Activated CD8-positive, alpha-beta T cell treated with anti-CD3 and anti-CD28 coated beads, Interleukin-2, amount 10 ng/mL, durations not matched to agents 7 days and 5 days (primary cell): ENCODE measurements at regions of chr10 and their contacts with region 1.

Region 1: DNA sequence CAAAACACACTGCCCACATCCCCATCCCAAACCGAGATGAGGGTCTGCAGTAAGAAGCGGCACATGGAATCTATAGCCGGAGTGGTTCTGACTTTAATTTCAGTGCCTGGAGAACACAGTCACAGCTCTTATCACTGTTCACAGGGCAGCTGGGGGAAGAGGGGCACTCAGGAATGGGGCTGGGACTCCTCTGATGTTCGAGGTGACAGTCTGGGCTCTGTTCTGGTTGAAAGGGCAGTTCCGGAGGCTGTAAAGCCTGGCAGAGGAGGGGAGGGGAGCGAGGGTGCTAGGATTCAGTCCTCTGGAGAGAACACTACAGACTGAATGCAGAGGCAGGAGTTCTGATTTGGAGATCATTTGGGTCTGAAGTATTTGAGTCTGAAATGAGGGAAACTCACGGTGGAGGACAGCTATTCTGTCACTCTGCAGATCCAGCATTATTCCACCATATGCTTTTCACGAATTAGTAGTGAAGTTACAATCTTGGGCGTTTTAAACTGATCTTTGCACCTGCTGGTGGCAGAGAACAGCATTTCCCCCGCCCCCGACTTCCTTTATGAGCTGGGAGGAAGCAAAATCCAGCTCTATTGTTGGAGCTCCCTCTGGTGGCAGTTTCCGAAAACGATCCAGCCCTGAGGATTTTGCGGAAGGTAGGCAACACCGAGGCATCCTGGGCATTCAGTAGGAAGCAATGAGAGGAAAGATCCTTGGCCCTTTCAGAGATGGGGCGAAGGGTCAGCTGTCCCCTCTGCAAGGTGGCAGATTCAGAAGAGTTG is 22.7 kb upstream of the KCNK18 start:
- DNase-seq: peak; percentile 87
- ATAC-seq: peak; percentile 87
- H3K4me3 Mint-ChIP-seq: peak overlapping the region; percentile 78
- H3K27ac Mint-ChIP-seq: peak overlapping the region; percentile 58
- H3K4me1 Mint-ChIP-seq: peaks cover 18% of the 10 kb centered on the region
- H3K27me3 Mint-ChIP-seq: peaks cover 36% of the 10 kb centered on the region

Region 2: DNA sequence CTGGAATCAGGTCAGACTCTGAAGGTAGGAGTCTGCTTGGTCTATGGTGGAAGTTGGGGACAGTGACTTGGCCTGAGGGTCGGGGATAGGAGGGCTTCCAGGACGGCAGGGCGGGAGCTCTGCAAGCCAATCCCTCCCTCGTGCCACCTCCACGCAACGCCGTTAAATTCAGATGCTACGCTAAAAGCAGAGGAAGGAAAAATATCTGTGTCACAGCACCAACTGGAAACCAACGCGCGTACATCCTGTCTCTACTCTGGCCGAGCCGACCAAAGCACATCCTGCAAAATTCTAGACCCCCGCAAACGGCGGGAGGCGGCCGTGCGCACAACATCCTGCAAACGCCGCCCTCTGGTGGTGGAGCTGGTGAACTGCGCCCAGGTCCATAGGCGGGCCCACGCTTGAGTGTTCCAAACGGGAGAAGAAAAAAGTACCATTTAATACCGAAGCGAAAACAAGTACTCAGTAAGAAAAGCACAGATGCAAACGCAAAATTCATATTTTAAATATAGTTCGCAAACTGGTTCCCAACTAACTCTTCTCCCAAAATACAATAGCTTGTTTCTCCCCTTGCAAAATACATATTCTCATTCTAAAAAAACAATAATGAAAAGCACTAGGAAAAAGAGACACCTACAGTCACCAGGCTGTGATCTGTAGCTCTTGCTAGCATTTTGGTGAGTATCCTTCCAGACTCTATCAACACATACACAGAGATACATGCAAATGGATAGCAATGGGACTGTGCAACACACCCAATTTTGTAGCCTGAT is 386.5 kb before region 1 on chr10:
- CTCF ChIA-PET with region 1: interaction called, 51 read pairs
- POLR2A ChIA-PET with region 1: no interaction called
- DNase-seq: peak; percentile 88
- ATAC-seq: peak; percentile 91
- H3K4me3 Mint-ChIP-seq: peak overlapping the region; percentile 49
- H3K27ac Mint-ChIP-seq: peak overlapping the region; percentile 74
- H3K4me1 Mint-ChIP-seq: peaks cover 12% of the 10 kb centered on the region
- H3K27me3 Mint-ChIP-seq: peaks cover 11% of the 10 kb centered on the region

Region 3: DNA sequence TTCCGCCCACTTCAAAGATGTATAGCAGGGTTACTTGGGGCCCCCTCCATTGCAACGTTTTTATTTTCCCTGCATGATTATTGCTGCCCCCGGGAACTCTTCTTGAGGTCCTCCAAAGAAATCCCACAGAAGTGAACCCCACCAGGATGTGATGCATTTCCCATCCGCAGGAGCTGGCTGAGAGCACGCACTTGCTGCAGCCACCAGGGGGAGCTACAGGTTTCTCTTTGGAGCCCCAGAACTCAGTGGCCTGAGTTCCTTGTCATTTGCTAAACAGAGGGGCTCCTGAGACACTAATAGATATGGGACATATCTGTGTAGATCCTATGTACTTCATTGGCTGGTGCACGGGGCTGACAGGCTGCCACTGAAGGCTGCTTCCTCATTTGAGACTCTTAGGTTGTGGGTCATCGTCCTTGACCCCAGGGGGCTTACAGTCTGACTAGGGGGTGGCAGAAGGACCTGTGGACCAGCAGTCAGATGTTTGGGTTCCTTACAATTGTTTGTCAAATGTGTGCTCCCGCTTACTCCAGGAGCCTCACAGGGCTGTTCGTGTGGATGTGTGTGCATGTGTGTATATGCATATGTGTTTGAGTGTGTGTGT is 377.6 kb before region 1 on chr10:
- CTCF ChIA-PET with region 1: interaction called, 120 read pairs
- POLR2A ChIA-PET with region 1: no interaction called
- DNase-seq: peak; percentile 77
- ATAC-seq: peak; percentile 79
- H3K4me3 Mint-ChIP-seq: no peak overlapping the region
- H3K27ac Mint-ChIP-seq: no peak overlapping the region
- H3K4me1 Mint-ChIP-seq: peaks cover 2% of the 10 kb centered on the region
- H3K27me3 Mint-ChIP-seq: peaks cover 7% of the 10 kb centered on the region

Region 4: DNA sequence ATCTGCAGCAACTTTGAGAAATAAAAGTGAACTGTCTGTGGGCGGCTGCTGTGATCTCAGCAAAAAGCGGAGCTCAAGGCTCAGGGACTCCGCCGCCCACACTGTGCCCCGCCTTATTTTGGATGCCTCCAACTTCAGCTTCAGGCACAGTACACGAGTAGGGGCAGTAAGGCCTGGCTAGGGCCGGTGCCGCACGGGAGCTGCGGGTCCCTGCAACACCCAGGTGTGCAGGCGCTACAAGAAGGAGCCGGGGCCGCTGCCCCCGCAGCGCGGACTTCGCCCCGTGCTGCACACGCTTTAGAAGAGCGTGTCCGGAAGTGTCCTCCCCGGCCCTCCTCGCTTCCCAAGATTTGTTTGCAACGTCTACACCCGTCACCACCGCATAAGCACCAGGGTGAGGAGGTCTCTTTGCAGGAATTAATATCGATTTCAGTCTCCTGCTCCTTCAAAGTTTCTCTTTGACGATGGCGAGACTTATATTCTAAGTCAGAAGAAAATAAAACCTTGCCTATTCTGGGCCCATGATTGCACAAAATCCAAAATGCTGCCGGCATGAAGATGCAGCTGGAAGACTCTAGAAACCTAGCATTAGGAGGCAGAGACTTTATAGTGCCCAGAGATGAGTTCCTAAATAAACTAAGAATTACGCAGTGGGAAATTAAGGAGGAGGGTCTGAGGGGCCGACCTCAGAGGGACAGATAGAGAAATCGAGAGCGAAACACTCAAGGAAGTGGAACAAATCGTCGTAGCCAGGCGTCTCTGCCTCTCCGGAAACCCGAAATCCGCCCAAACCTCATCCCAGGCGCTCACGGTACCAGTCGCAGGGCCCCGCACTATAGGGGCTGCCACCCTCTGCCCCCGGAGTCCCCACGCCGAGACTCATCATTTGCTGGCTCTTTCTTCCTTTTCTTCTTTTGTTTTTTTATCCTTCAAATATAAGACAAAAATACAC is 43.0 kb before region 1 on chr10:
- CTCF ChIA-PET with region 1: interaction called, 11 read pairs
- POLR2A ChIA-PET with region 1: no interaction called
- DNase-seq: no peak
- ATAC-seq: no peak
- H3K4me3 Mint-ChIP-seq: peak overlapping the region; percentile 10
- H3K27ac Mint-ChIP-seq: no peak overlapping the region
- H3K4me1 Mint-ChIP-seq: peaks cover 13% of the 10 kb centered on the region
- H3K27me3 Mint-ChIP-seq: peaks cover 67% of the 10 kb centered on the region

Region 5: DNA sequence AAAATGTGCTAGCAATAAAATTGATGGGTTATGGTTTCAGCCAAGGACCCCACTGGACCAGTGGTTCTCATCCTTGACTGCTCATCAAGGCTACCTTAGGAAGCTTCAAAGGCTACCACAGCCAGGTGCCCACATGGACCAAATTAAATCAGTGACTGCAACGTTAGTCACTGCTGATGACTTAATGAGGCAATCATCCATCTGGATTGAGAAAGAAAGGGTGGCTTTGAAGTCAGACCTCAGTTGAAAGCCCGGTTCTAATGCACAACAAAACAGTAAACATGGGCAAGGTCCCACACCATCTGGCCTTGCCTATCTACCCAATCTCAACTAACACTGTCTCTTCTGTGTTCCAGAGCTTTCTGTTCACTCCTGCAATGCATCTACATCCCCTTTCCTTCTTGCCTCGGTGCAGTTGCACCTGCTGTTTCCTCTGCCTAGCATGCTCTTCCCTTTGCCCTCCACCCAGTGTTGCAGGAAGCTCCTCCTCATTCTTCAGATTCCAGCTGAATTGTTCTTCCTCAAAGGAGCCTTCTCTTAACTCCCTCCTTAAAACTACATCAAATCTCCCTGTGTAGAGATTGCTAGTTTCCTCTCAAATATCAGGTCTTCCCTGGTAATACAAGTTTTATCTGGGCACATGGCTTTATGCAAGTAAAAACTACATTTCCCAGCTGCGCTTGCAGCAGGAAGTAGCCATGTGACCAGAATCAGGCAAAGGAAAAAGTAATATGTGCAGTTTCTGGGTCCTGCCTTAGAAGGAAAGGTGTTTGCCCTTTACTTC is 12.4 kb after region 1 on chr10:
- CTCF ChIA-PET with region 1: interaction called, 14 read pairs
- POLR2A ChIA-PET with region 1: no interaction called
- DNase-seq: no peak
- ATAC-seq: no peak
- H3K4me3 Mint-ChIP-seq: no peak overlapping the region
- H3K27ac Mint-ChIP-seq: no peak overlapping the region
- H3K4me1 Mint-ChIP-seq: no peaks in the 10 kb centered on the region
- H3K27me3 Mint-ChIP-seq: no peaks in the 10 kb centered on the region